Pancreas (tissue), 10 donors: ENCODE measurements at regions of chr12 and their contacts with region 1.

Region 1: GRCh38 chr12:71780237-71780822 is 25.7 kb downstream of the RAB21 start:
- DNase-seq: peak in 2 of 6 donors; percentile 22 to 26
- ATAC-seq: peak; percentile 53 to 80 (median 79)
- H3K4me3 ChIP-seq: no peak overlapping the region
- H3K27ac ChIP-seq: no peak overlapping the region
- H3K4me1 ChIP-seq: peaks cover 0 to 10% (median 0%) of the 10 kb centered on the region in 3 donors
- H3K27me3 ChIP-seq: no peaks in the 10 kb centered on the region
- CTCF ChIP-seq: peak; percentile 32 to 58 (median 45)

Region 2: DNA sequence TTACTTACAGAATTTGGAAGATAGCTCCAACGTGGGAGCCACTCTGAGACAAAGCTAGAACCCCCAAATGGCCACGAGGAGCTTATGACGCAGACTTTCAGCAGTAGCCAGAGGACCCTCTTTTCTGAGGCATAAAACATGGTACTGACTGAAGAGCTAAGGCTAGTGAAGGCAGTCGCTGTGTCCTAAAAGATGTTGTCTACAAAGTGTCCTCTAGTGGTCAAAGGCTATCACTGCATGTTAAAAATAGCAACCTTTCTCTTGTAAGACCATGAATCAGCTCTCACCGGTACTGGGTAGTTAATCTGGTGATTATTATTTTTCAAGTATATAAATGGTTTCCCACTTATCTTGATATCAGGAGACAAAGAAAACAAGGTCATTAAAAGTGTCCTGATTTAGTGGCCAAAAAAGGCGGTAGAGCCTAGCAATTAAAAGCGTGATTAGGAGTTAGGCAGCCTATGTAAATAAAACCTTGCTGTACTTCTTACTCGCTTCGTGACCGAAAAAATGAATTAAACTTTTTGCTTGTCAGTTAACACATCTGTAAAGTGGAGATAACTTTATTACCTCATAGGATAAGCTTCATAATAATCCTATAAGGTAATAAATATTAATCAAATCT is 387.7 kb before region 1 on chr12:
- intact Hi-C with region 1: no loop called
- DNase-seq: peak in 1 of 6 donors; percentile 18
- ATAC-seq: peak; percentile 87 to 100 (median 97)
- H3K4me3 ChIP-seq: no peak overlapping the region
- H3K27ac ChIP-seq: no peak overlapping the region
- H3K4me1 ChIP-seq: no peaks in the 10 kb centered on the region
- H3K27me3 ChIP-seq: no peaks in the 10 kb centered on the region
- CTCF ChIP-seq: peak; percentile 60 to 84 (median 78)

Region 3: DNA sequence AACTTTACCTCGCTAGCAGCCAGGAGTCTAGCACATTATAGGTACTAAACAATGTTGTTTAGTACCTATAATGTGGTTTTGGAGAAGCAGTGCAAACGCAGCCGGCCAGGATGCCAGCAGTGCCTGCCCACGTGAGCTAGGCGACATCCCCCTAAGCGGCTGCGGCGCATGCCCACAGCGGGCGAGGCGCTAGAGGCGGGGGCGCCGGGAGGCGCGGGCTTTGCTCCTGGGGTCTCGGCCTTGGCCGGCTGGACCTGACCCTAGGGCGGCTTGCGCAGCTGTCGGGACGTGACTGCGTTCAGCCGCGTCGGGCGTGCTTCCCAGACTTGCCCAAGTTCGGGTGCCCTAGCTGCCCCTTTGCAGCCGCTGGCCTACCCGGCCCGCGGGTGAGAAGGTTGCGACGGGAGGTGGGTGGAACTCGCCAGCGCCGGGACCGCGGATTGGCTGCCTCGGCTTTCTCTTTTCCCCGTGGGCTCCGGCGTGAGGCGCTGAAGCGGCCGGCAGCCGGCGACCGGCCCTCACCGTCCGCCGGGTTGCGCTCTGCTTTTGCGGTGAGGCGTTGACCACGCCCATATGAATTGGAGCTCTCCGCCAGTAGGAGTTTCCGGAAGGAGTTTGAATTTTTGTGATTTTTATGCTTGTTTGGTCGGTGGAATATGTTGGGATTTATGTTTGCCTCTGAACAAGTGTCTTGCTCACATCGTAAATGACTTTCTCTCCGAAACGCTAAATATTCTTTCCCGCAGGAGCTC is 94.2 kb before region 1 on chr12 and contains the start of gene TMEM19:
- intact Hi-C with region 1: no loop called
- DNase-seq: peak; percentile 89 to 93 (median 92)
- ATAC-seq: peak; percentile 97 to 99 (median 98)
- H3K4me3 ChIP-seq: peak within 1 kb of the TSS; percentile 64 to 82 (median 70)
- H3K27ac ChIP-seq: peak within 1 kb of the TSS; percentile 80 to 90 (median 86)
- H3K4me1 ChIP-seq: peaks cover 0 to 23% (median 6%) of the 10 kb centered on the region in 3 donors
- H3K27me3 ChIP-seq: no peaks in the 10 kb centered on the region
- CTCF ChIP-seq: no peak
- total RNA-seq, gene TMEM19: 5.8 to 14.8 (median 7.9) TPM

Region 4: GRCh38 chr12:71840231-71840847 is 60.0 kb after region 1 on chr12:
- intact Hi-C with region 1: loop called in 1 of 3 experiments (anchors 10 kb)
- DNase-seq: peak in 1 of 6 donors; percentile 21
- ATAC-seq: peak; percentile 24 to 62 (median 50)
- H3K4me3 ChIP-seq: peak overlapping the region; percentile 43 to 74 (median 66)
- H3K27ac ChIP-seq: peak overlapping the region; percentile 87 to 99 (median 95)
- H3K4me1 ChIP-seq: peaks cover 12 to 36% (median 20%) of the 10 kb centered on the region in 3 donors
- H3K27me3 ChIP-seq: no peaks in the 10 kb centered on the region
- CTCF ChIP-seq: no peak